ENCODE measurements at regions of chr1 and their contacts with region 1.

Region 1: GRCh38 chr1:12019858-12020509 is 686 bp downstream of the MIIP start:
- DNase-seq: no peak
- CTCF ChIP-seq: no peak

Region 2: DNA sequence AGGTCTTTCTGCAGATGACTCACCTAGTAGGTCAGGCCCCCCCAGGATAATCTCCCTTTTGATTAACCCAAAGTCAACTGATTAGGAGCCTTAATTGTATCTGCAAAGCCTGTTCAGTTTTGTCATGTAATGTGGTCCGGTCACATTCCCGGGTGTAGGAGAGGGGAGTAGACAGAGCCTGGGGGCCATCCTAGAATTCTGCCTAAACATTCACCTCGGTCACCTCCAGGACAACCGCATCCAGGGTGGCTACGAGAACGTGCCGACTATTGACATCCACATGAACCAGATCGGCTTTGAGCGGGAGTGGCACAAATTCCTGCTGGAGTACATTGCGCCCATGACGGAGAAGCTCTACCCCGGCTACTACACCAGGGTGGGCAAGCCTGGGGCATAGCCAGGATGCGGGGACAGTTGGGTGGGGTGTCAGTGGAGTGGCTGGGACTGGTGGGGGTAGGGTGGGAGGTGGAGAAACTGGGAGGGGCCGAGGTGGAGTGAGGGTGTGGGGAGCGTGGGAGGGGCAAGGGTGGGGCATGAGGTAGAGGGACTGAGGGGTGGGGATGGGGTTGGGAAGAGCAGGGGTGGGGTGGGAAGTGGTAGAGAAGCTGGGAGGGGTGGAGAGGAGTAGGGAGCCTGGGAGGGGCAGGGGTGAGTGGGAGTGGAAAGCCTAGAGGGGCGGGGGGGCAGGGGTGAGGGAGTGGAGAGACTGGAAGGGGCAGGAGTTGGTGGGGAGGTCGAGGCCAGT is 49.4 kb before region 1 on chr1:
- CTCF ChIA-PET with region 1: no interaction called
- POLR2A ChIA-PET with region 1: no interaction called
- DNase-seq: no peak
- CTCF ChIP-seq: no peak

Region 3: GRCh38 chr1:12031039-12031980 is 11.3 kb after region 1 on chr1:
- CTCF ChIA-PET with region 1: interaction called, 13 read pairs
- POLR2A ChIA-PET with region 1: interaction called, 10 read pairs
- DNase-seq: peak; percentile 71
- CTCF ChIP-seq: peak; percentile 66

Region 4: GRCh38 chr1:12067900-12068821 is 48.2 kb after region 1 on chr1:
- CTCF ChIA-PET with region 1: no interaction called
- POLR2A ChIA-PET with region 1: no interaction called
- DNase-seq: peak; percentile 68
- CTCF ChIP-seq: no peak

Measured in GM10248 (cell line).